Vagina (tissue), 2 donors: ENCODE measurements at regions of chr4 and their contacts with region 1.

Region 1: GRCh38 chr4:17544205-17544604 is 29.2 kb downstream of the CLRN2 start:
- DNase-seq: no peak
- H3K4me3 ChIP-seq: no peak overlapping the region
- H3K27ac ChIP-seq: no peak overlapping the region
- H3K4me1 ChIP-seq: no peaks in the 10 kb centered on the region
- H3K27me3 ChIP-seq: no peaks in the 10 kb centered on the region
- CTCF ChIP-seq: no peak
- POLR2A ChIP-seq: no peak

Region 2: DNA sequence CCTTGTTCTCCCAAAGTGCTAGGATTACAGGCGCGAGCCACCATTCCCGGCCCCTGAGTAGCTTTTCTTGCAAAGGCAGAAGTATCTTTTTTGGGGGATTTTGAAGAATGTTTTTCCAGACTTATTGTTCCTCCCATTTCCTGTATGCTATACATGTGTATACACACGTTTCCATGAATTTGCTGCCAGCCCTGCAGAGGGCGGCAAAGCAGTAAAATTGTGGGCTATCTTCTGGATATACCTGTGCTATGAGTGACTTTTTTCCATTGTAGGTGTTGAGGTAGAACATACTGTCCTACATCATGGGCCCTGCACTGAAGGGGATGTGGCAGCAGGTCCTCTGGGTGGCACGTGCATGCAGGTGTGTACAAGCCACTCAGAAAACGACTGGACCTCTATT is 53.3 kb after region 1 on chr4:
- intact Hi-C with region 1: no loop called
- DNase-seq: no peak
- H3K4me3 ChIP-seq: no peak overlapping the region
- H3K27ac ChIP-seq: no peak overlapping the region
- H3K4me1 ChIP-seq: no peaks in the 10 kb centered on the region
- H3K27me3 ChIP-seq: no peaks in the 10 kb centered on the region
- CTCF ChIP-seq: no peak
- POLR2A ChIP-seq: no peak

Region 3: DNA sequence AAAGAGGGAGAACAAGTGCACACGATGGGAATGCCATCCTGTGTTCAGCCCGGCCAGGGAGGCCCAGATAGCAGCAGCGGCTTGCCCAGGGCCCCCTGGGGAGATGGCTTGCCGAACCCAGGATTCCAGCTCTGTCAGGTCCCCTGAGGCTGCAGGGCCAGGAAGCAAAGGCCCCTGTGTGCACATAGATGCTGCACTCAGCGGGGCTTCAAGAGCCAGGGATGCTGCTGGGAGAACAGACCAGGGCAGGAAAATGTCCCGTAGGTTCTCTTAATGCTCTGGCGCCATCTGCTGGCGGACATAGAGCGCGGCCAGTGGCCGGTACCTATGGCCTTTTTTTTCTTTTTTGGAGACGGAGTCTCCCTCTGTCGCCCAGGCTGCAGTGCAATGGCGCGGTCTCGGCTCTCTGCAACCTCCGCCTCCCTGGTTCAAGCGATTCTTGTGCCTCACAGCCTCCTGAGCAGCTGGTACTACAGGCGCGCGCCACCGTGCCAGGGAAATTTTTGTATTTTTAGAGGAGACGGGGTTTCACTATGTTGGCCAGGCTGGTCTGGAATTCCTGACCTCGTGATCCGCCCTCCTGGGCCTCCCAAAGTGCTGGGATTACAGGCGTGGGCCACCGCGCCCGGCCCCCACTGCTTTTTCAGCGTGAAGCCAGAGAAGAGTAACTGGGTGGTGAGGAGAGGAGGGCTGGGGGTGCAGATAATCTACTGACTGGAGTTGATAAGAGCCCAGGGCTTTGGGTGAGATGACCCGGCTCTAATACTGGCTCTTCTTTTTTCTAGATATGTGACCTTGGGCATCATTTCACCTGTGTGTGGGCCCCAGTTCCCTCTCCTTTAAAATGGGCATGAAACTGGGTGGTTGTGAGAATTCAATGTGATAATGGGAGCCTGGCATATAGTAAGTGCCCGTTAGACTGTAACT is 92.8 kb after region 1 on chr4:
- intact Hi-C with region 1: loop called (anchors 10 kb)
- DNase-seq: no peak
- H3K4me3 ChIP-seq: no peak overlapping the region
- H3K27ac ChIP-seq: no peak overlapping the region
- H3K4me1 ChIP-seq: no peaks in the 10 kb centered on the region
- H3K27me3 ChIP-seq: no peaks in the 10 kb centered on the region
- CTCF ChIP-seq: peak; percentile 48 to 91 (median 65)
- POLR2A ChIP-seq: no peak